ENCODE measurements at regions of chr12 and their contacts with region 1.

Region 1: DNA sequence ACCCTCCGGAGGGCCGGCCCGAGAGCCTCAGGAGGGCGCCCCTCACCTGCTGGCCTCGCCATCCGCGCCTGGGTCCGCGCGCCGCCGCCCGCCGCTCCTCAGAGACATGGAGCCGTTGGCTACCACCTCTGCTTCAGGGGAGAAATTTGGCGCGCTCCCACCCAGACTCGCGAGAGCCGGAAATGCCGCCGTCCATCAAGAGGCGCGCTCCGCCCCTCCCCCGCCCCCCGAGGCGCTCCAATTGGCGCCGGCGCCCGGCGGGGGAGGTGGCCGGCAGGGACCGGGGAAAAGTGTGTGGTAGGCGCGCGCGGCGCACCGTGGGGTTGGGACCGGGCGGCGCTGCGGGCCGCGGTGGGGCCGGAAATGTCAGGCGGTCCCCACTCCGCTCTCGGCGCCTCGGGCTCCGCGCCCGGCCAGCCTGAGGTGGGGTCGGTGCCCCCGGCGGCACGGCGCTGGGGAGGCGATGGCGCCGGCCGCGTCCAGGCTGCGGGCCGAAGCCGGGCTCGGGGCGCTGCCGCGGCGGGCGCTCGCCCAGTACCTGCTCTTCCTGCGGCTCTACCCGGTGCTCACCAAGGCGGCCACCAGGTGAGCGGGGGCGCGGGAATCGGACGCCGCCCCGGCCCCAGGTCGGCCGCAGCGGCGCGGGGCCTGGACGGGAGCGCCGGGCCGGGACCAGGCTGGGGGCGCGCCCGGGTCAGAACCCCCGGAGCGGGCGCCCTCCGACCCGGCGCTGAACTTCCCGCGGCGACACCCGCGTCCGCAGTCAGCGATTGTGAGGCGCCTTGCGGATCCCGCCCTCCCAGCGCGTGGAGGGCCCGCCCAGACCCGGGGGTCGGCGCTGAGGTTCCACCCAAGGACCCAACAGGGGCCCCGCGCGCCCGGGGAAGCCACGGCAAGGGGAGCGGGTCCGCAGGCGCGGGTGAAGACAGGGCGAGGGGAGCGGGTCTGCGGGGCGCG is at the starts of genes POLE and PXMP2:
- DNase-seq: peak; percentile 96
- ATAC-seq: peak; percentile 94
- H3K4me3 ChIP-seq: peak within 1 kb of the TSS in 4 of 5 experiments; percentile 29 to 64 (median 60)
- H3K4me3 Mint-ChIP-seq: peak within 1 kb of the TSS; percentile 87
- H3K27ac ChIP-seq: peak within 1 kb of the TSS in 1 of 2 donors; percentile 56
- H3K27ac Mint-ChIP-seq: peak within 1 kb of the TSS; percentile 71
- H3K4me1 ChIP-seq: peaks cover 8 to 12% of the 10 kb centered on the region in 2 donors
- H3K4me1 Mint-ChIP-seq: peaks cover 20% of the 10 kb centered on the region
- H3K27me3 ChIP-seq: no peaks in the 10 kb centered on the region
- H3K27me3 Mint-ChIP-seq: no peaks in the 10 kb centered on the region
- CTCF ChIP-seq: no peak
- total RNA-seq, gene POLE: 62.0 and 69.1 TPM in 2 replicates
- total RNA-seq, gene PXMP2: 6.7 and 10.2 TPM in 2 replicates

Region 2: GRCh38 chr12:132108211-132108830 is 579.2 kb before region 1 on chr12:
- CTCF ChIA-PET with region 1: no interaction called
- POLR2A ChIA-PET with region 1: no interaction called
- intact Hi-C with region 1: no loop called
- DNase-seq: no peak
- ATAC-seq: no peak
- H3K4me3 ChIP-seq: no peak overlapping the region
- H3K4me3 Mint-ChIP-seq: no peak overlapping the region
- H3K27ac ChIP-seq: no peak overlapping the region
- H3K27ac Mint-ChIP-seq: no peak overlapping the region
- H3K4me1 ChIP-seq: no peaks in the 10 kb centered on the region
- H3K4me1 Mint-ChIP-seq: no peaks in the 10 kb centered on the region
- H3K27me3 ChIP-seq: no peaks in the 10 kb centered on the region
- H3K27me3 Mint-ChIP-seq: no peaks in the 10 kb centered on the region
- CTCF ChIP-seq: no peak

Region 3: DNA sequence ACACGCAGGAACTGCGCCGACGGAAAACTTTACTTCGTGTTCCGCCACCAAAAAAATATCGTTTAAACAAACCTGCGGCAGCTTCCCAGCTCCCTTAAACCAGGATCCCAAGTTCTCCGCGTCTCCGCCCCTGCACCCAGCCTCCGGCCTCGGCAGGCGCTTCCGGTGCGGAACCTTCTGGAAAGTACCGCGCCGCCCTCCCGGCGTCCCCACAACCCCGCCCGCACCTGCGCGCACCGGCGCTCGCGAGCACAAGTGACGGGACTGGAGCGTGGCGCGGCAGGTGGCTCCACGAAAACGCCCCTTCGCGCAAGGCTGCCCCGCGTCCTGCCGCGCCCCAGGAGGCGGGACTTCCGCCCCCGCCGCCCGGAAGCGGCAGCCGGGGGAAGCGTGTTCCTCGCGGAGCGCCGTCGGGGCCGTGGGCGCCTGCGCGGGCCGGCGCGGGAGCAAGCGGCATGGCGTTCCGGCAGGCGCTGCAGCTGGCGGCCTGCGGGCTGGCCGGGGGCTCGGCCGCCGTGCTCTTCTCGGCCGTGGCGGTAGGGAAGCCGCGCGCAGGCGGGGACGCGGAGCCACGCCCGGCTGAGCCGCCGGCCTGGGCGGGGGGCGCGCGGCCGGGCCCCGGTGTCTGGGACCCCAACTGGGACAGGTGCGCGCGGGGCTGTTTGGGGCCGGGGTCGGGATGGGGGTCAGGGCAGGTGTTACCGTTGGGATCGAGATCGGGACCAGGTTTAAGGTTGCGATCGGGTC is 23.1 kb after region 1 on chr12 and contains the start of gene PGAM5:
- CTCF ChIA-PET with region 1: no interaction called
- POLR2A ChIA-PET with region 1: no interaction called
- intact Hi-C with region 1: loop called (anchors 1 kb)
- DNase-seq: peak; percentile 98
- ATAC-seq: peak; percentile 96
- H3K4me3 ChIP-seq: peak within 1 kb of the TSS; percentile 61 to 91 (median 79)
- H3K4me3 Mint-ChIP-seq: peak within 1 kb of the TSS; percentile 92
- H3K27ac ChIP-seq: peak within 1 kb of the TSS; percentile 95 to 97
- H3K27ac Mint-ChIP-seq: peak within 1 kb of the TSS; percentile 90
- H3K4me1 ChIP-seq: peaks cover 10 to 23% of the 10 kb centered on the region in 2 donors
- H3K4me1 Mint-ChIP-seq: peaks cover 13% of the 10 kb centered on the region
- H3K27me3 ChIP-seq: no peaks in the 10 kb centered on the region
- H3K27me3 Mint-ChIP-seq: no peaks in the 10 kb centered on the region
- CTCF ChIP-seq: no peak
- total RNA-seq, gene PGAM5: 28.3 and 29.9 TPM in 2 replicates

Region 4: GRCh38 chr12:132729541-132730320 is 42.2 kb after region 1 on chr12:
- CTCF ChIA-PET with region 1: no interaction called
- POLR2A ChIA-PET with region 1: no interaction called
- intact Hi-C with region 1: no loop called
- DNase-seq: no peak
- ATAC-seq: no peak
- H3K4me3 ChIP-seq: no peak overlapping the region
- H3K4me3 Mint-ChIP-seq: no peak overlapping the region
- H3K27ac ChIP-seq: no peak overlapping the region
- H3K27ac Mint-ChIP-seq: no peak overlapping the region
- H3K4me1 ChIP-seq: no peaks in the 10 kb centered on the region
- H3K4me1 Mint-ChIP-seq: no peaks in the 10 kb centered on the region
- H3K27me3 ChIP-seq: no peaks in the 10 kb centered on the region
- H3K27me3 Mint-ChIP-seq: no peaks in the 10 kb centered on the region
- CTCF ChIP-seq: no peak